ENCODE measurements at regions of chr12 and their contacts with region 1.

Region 1: GRCh38 chr12:50924439-50925341 is 27.7 kb upstream of the HIGD1C start:
- DNase-seq: peak; percentile 49
- ATAC-seq: peak; percentile 88
- H3K4me3 Mint-ChIP-seq: peak overlapping the region; percentile 97
- H3K27ac Mint-ChIP-seq: peak overlapping the region; percentile 98
- H3K4me1 Mint-ChIP-seq: peaks cover 75% of the 10 kb centered on the region
- H3K27me3 Mint-ChIP-seq: no peaks in the 10 kb centered on the region
- CTCF ChIP-seq: no peak

Region 2: GRCh38 chr12:50825372-50825838 is 99.3 kb before region 1 on chr12:
- CTCF ChIA-PET with region 1: interaction called, 9 read pairs
- POLR2A ChIA-PET with region 1: interaction called, 11 read pairs
- intact Hi-C with region 1: loop called (anchors 1 kb)
- DNase-seq: no peak
- ATAC-seq: peak; percentile 80
- H3K4me3 Mint-ChIP-seq: no peak overlapping the region
- H3K27ac Mint-ChIP-seq: no peak overlapping the region
- H3K4me1 Mint-ChIP-seq: peaks cover 6% of the 10 kb centered on the region
- H3K27me3 Mint-ChIP-seq: no peaks in the 10 kb centered on the region
- CTCF ChIP-seq: no peak

Region 3: DNA sequence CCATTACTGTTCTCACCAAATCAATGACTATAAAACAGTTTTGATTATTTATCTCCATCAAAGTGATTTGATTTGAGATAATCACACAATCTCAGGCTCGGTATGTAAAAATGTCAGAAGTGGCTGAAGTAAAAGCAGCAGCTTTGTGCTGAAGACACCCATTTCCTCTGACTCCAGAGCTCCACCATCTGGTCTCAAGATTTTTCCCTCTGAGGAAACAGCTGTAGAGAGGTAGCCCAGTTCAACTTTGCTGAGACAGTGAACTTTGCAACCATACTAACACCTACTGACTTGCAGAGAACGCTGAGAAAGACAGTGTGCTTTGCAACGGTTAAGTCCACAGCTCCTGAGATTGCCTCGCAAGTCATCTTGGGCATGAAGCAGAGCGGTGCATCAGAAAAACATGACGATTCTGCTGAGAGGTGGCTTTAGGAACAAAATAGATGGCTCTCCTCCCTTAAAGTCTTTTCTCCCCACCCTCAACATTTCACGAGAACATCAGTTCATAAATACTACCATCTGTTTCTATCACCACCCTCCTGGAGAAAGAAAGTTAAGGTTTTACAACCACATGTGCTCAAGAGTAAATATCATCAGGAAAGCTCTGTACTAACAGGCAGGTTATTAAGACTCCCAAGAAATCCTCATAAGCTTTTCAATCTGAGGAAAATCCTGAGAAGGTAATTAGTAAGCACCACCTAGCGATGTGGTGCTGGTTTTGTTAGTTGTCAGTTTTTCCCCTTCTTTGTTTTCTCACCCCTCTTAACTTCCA is 62.5 kb after region 1 on chr12:
- CTCF ChIA-PET with region 1: interaction called, 42 read pairs
- POLR2A ChIA-PET with region 1: interaction called, 4 read pairs
- intact Hi-C with region 1: loop called (anchors 2 kb)
- DNase-seq: no peak
- ATAC-seq: peak; percentile 72
- H3K4me3 Mint-ChIP-seq: no peak overlapping the region
- H3K27ac Mint-ChIP-seq: no peak overlapping the region
- H3K4me1 Mint-ChIP-seq: peaks cover 5% of the 10 kb centered on the region
- H3K27me3 Mint-ChIP-seq: no peaks in the 10 kb centered on the region
- CTCF ChIP-seq: no peak

Region 4: DNA sequence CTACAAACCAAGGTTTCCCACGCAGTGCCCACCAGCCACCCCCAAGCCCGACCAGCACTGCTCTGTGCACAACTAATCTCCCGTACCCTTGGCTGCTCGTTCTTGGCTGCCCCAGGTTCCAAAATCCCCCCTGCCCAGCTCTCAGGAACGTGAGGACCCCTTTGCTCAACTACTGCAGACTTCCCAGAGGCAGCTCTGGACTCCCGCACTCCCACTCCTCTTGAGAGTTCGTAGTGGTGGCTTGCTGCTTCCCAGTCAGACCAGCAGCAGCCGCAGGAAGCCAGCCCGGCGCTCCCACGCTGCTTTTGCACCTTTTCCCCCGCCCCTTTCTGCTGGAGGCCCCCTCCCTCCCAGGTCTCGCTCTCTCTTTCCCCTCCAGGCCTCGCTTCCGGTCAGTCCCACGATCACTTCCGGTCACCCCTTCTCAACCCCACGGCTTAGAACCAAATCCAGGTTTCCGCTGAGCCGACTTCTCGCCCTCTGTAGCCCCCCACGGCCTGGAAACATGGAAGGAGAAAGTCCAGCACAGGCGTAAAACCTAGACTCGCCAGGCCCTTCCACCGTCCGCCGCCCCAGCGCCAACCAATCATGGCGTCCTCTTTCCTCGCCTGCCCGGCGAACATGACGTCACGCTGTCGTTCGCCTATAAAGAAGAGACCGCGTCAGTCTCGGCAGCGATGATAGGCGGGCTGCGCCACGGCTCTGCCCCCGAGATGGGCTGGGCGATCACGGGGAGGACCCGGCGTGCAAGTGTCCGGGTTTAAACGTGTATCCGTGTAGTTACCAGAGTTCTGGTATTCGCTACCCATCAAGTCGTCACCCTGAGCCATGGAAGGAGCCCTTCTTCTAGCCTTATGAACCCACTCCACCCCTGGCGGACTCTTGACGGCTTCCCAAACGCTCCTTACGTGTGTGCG is 248.1 kb after region 1 on chr12 and contains the start of gene TFCP2:
- CTCF ChIA-PET with region 1: no interaction called
- POLR2A ChIA-PET with region 1: interaction called, 5 read pairs
- intact Hi-C with region 1: loop called (anchors 5 kb)
- DNase-seq: peak; percentile 84
- ATAC-seq: peak; percentile 98
- H3K4me3 Mint-ChIP-seq: peak within 1 kb of the TSS; percentile 77
- H3K27ac Mint-ChIP-seq: peak within 1 kb of the TSS; percentile 68
- H3K4me1 Mint-ChIP-seq: peaks cover 9% of the 10 kb centered on the region
- H3K27me3 Mint-ChIP-seq: no peaks in the 10 kb centered on the region
- CTCF ChIP-seq: no peak
- total RNA-seq, gene TFCP2: 34.9 and 36.7 TPM in 2 replicates

Measured in activated B cell treated with CpG ODN at 0.5 μM for 24 hours (primary cell).